ENCODE measurements at regions of chr15 and their contacts with region 1.

Region 1: GRCh38 chr15:80567721-80568157 is 127.4 kb upstream of the ABHD17C start:
- DNase-seq: peak in 4 of 5 donors; percentile 33 to 50 (median 48)
- ATAC-seq: peak; percentile 56 to 85 (median 81)
- H3K4me3 ChIP-seq: no peak overlapping the region
- H3K27ac ChIP-seq: no peak overlapping the region
- H3K4me1 ChIP-seq: peaks cover 0 to 6% (median 0%) of the 10 kb centered on the region in 12 donors
- H3K27me3 ChIP-seq: peaks cover 0 to 5% (median 0%) of the 10 kb centered on the region in 9 donors
- CTCF ChIP-seq: peak; percentile 46 to 79 (median 64)
- POLR2A ChIP-seq: no peak

Region 2: GRCh38 chr15:80599359-80599758 is 31.6 kb after region 1 on chr15:
- intact Hi-C with region 1: no loop called
- DNase-seq: no peak
- ATAC-seq: no peak
- H3K4me3 ChIP-seq: no peak overlapping the region
- H3K27ac ChIP-seq: no peak overlapping the region
- H3K4me1 ChIP-seq: no peaks in the 10 kb centered on the region
- H3K27me3 ChIP-seq: peaks cover 0 to 3% (median 0%) of the 10 kb centered on the region in 9 donors
- CTCF ChIP-seq: no peak
- POLR2A ChIP-seq: no peak

Region 3: DNA sequence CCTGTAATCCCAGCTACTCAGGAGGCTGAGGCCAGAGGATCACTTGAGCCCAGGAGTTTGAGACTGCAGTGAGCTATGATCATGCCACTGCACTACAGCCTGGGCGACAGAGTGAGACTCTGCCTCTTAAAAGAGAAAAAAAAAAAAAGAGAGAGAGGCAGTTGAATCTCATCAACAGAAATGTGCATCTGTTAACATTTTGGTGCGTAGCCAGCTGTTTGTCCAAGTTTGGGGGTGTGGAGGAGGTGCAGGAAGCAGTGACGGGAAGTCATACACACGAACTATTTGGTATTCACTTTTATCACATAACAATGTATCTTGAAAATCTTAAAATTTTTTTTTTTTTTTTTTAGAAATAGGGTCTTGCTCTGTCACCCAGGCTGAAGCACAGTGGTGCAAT is 193.2 kb after region 1 on chr15:
- intact Hi-C with region 1: loop called in 1 of 10 experiments (anchors 5 kb)
- DNase-seq: no peak
- ATAC-seq: no peak
- H3K4me3 ChIP-seq: no peak overlapping the region
- H3K27ac ChIP-seq: no peak overlapping the region
- H3K4me1 ChIP-seq: no peaks in the 10 kb centered on the region
- H3K27me3 ChIP-seq: no peaks in the 10 kb centered on the region
- CTCF ChIP-seq: no peak
- POLR2A ChIP-seq: no peak